OCI-LY7 (cell line): ENCODE measurements at regions of chr7 and their contacts with region 1.

Region 1: DNA sequence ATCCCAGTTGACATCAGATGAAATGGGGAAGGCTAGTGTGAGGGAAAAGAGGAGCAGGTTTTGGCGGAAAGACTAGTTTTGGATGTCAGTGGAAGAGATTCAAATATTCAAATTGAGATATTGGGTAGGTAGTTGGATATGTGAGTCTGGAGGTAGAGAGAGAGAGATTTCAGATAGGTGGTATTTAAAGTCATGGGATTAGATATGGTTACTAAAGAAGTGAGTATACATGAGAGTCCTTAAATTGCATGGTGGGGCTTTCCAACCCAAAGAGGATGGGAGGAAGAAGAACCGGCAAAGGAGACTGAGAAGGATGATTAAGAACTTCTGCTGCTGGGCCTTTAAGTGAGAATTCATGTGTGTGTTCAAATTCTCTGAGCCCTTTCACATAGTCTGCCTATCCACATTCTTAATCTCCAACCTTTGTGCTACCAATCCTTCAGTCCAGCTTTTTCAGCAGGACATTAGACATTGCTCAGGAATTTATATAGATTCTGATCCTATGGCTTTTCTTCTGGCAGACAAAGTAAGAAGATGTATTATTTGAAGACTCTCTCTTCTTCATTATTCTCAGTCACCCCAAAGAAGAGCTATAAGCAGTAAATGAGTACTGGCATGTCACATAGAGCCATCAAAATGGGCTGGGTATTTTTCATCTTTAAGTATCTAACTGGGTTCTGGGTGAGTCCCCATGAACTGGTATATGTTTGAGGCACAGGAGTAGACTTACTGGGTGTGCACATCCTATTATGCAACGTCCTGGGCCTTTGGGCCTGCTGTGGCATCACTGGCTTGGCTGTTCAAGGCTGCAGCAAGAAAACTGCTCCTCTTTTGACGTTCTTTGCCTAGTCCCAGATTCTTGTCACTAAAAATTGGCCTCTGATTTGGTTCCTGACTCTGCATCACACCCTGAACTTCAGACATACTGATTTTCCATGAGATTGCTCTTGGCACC is 33.6 kb downstream of the ST7 start:
- DNase-seq: no peak
- H3K4me3 ChIP-seq: no peak overlapping the region
- H3K27ac ChIP-seq: no peak overlapping the region
- H3K4me1 ChIP-seq: no peaks in the 10 kb centered on the region
- CTCF ChIP-seq: no peak

Region 2: GRCh38 chr7:116942504-116942903 is 44.4 kb before region 1 on chr7:
- CTCF ChIA-PET with region 1: no interaction called
- POLR2A ChIA-PET with region 1: no interaction called
- intact Hi-C with region 1: no loop called
- DNase-seq: no peak
- H3K4me3 ChIP-seq: no peak overlapping the region
- H3K27ac ChIP-seq: no peak overlapping the region
- H3K4me1 ChIP-seq: no peaks in the 10 kb centered on the region
- CTCF ChIP-seq: no peak

Region 3: GRCh38 chr7:117019786-117020590 is 33.1 kb after region 1 on chr7:
- CTCF ChIA-PET with region 1: no interaction called
- POLR2A ChIA-PET with region 1: no interaction called
- intact Hi-C with region 1: no loop called
- DNase-seq: no peak
- H3K4me3 ChIP-seq: no peak overlapping the region
- H3K27ac ChIP-seq: no peak overlapping the region
- H3K4me1 ChIP-seq: no peaks in the 10 kb centered on the region
- CTCF ChIP-seq: no peak

Region 4: GRCh38 chr7:117119192-117119924 is 132.5 kb after region 1 on chr7:
- CTCF ChIA-PET with region 1: no interaction called
- POLR2A ChIA-PET with region 1: interaction called, 3 read pairs
- intact Hi-C with region 1: loop called (anchors 2 kb)
- DNase-seq: peak; percentile 66
- H3K4me3 ChIP-seq: no peak overlapping the region
- H3K27ac ChIP-seq: no peak overlapping the region
- H3K4me1 ChIP-seq: no peaks in the 10 kb centered on the region
- CTCF ChIP-seq: peak; percentile 93